AG04449 (cell line): ENCODE measurements at regions of chr10 and their contacts with region 1.

Region 1: GRCh38 chr10:29496341-29497162 is 138.2 kb downstream of the SVIL start:
- DNase-seq: no peak
- H3K4me3 ChIP-seq: no peak overlapping the region
- CTCF ChIP-seq: peak; percentile 96

Region 2: GRCh38 chr10:29377333-29377961 is 119.1 kb before region 1 on chr10:
- CTCF ChIA-PET with region 1: interaction called, 27 read pairs
- POLR2A ChIA-PET with region 1: no interaction called
- DNase-seq: no peak
- H3K4me3 ChIP-seq: no peak overlapping the region
- CTCF ChIP-seq: peak; percentile 43

Region 3: GRCh38 chr10:29392376-29393021 is 104.1 kb before region 1 on chr10:
- CTCF ChIA-PET with region 1: interaction called, 42 read pairs
- POLR2A ChIA-PET with region 1: no interaction called
- DNase-seq: no peak
- H3K4me3 ChIP-seq: no peak overlapping the region
- CTCF ChIP-seq: peak; percentile 65

Region 4: GRCh38 chr10:29470355-29470705 is 26.2 kb before region 1 on chr10:
- CTCF ChIA-PET with region 1: interaction called, 25 read pairs
- POLR2A ChIA-PET with region 1: no interaction called
- DNase-seq: no peak
- H3K4me3 ChIP-seq: no peak overlapping the region
- CTCF ChIP-seq: peak; percentile 40

Region 5: DNA sequence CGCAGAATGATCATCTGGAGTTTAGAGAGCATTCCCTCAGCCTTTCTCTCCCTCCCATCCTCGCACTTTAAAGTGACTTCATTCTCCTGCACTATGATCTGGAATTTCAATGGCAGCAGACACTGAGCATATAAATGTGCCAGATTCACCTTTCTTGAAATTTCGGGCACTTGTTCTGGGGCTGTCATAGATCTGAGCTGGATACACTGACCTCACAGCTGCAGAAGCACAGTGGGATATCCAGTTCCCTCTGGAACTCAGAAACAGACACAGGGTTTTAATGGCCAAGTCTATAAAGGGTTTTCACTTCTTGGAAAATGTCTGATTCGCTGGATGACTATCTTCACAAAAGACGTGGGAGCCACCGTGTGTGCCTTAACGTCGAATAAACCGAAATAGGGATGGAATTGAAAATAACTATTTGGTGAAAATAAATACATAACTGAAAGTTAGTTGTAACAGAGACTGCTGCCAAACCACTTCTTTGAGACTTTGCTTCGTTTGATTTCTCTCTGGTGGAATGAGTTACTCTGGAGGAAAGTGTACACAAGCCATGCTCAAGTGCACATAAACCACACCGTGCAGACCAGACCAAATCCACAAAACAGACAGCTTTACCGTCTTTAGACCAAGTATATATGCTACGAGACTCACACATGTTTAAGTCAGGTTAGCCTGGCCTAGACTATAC is 12.1 kb after region 1 on chr10:
- CTCF ChIA-PET with region 1: interaction called, 65 read pairs
- POLR2A ChIA-PET with region 1: no interaction called
- DNase-seq: no peak
- H3K4me3 ChIP-seq: no peak overlapping the region
- CTCF ChIP-seq: no peak

Region 6: GRCh38 chr10:29535012-29535777 is 38.6 kb after region 1 on chr10:
- CTCF ChIA-PET with region 1: interaction called, 19 read pairs
- POLR2A ChIA-PET with region 1: no interaction called
- DNase-seq: peak; percentile 69
- H3K4me3 ChIP-seq: peak overlapping the region; percentile 40
- CTCF ChIP-seq: peak; percentile 86